Naive thymus-derived CD4-positive, alpha-beta T cell (primary cell): ENCODE measurements at regions of chr4 and their contacts with region 1.

Region 1: DNA sequence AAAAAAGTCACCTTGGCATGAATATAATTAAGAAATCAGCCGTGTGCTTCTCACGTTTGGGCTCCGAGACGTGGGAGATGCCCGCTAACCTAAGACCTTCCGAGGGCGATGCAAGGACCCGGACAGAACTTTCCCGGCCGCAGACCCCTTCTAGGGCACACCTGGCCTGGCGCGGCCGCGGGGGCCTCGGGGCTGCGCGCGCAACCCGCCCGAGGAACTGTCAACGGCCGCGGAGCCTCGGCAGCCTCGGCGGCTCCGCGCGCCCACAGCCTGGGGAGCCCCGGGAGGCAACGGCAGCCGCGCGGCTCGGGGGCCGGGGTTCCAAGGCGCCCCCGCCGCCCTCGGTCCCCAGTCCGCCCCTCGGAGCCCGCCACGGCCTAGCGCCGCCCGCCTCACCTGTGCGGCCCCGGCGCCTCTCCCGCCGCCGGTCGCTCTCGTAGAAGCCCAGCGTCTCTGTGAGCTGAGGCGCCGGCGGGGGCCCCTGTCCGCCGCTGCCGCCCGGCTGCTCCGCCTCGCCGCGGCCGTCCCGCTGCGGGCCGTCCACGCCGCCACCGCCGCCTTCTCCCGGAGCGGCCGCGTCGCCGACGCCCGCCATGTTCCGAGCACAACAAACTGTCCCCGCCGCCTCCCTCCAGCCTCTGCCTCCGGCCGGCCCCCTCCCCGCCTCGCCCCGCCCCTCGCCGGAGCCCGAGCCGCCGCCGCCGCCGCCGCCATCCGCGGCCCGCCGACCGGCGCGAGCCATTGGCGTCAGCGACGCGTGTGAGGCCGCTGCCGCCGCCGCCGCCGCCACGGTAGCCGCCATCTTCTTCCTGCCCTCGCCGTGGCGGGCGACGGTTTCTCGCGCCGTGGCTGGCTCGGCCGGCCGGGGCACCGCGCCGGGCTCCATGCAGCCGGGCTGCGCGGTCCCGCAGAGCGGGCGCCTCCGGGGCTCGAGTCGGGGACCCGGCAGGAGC is at the start of gene TAPT1:
- DNase-seq: peak; percentile 49 to 89 (median 63)
- ATAC-seq: peak; percentile 84
- H3K4me3 ChIP-seq: peak within 1 kb of the TSS; percentile 74
- H3K4me3 Mint-ChIP-seq: peak within 1 kb of the TSS; percentile 85 to 96 (median 92)
- H3K27ac ChIP-seq: peak within 1 kb of the TSS; percentile 84
- H3K27ac Mint-ChIP-seq: peak within 1 kb of the TSS; percentile 90 to 98 (median 96)
- H3K4me1 ChIP-seq: peaks cover 30 to 35% of the 10 kb centered on the region in 2 donors
- H3K4me1 Mint-ChIP-seq: peaks cover 40 to 67% (median 58%) of the 10 kb centered on the region in 7 donors
- H3K27me3 ChIP-seq: no peaks in the 10 kb centered on the region
- H3K27me3 Mint-ChIP-seq: peaks cover 0 to 2% (median 0%) of the 10 kb centered on the region in 5 donors
- total RNA-seq, gene TAPT1: 43.0 to 82.5 (median 70.6) TPM

Region 2: DNA sequence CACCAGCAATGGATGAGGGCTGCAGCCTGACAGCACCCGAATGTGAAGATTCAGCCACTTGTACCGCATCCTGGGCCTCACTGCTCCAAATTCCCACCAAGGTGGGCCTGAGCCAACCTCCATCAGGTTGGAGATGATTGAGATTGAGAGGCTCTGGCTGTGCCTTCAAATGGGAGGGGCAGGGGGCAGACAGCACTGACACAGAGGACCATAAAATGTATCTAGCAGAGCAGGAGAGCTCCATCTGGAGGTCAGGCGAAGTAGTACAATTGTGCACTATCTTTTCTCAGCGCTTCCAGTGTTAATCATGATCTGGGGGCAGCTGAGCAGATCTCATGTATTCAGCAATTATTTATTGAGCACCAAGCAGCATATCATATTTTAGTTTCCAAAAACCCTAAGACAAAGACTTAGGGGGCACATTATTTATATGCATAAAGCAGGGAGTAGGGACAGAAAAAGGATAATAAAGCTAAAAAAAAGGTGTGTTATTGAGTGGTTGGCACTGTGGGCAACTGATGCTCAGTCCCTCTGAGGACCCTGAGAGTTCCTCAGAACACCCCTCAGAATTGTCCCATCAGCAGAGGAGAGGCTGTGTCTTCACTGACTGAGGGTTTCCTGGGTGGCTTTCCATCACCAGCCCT is 829.9 kb before region 1 on chr4:
- CTCF ChIA-PET with region 1: no interaction called
- POLR2A ChIA-PET with region 1: no interaction called
- intact Hi-C with region 1: loop called in 1 of 2 experiments (anchors 10 kb)
- DNase-seq: peak in 7 of 9 donors; percentile 31 to 57 (median 50)
- ATAC-seq: peak; percentile 85
- H3K4me3 ChIP-seq: no peak overlapping the region
- H3K4me3 Mint-ChIP-seq: no peak overlapping the region
- H3K27ac ChIP-seq: no peak overlapping the region
- H3K27ac Mint-ChIP-seq: peak overlapping the region in 1 of 9 donors; percentile 68
- H3K4me1 ChIP-seq: peaks cover 7 to 12% of the 10 kb centered on the region in 2 donors
- H3K4me1 Mint-ChIP-seq: peaks cover 10 to 52% (median 37%) of the 10 kb centered on the region in 7 donors
- H3K27me3 ChIP-seq: no peaks in the 10 kb centered on the region
- H3K27me3 Mint-ChIP-seq: no peaks in the 10 kb centered on the region

Region 3: GRCh38 chr4:15681207-15682015 is 544.7 kb before region 1 on chr4 and contains the start of gene FAM200B:
- CTCF ChIA-PET with region 1: no interaction called
- POLR2A ChIA-PET with region 1: no interaction called
- intact Hi-C with region 1: loop called (anchors 1 to 10 kb)
- DNase-seq: peak; percentile 87 to 100 (median 93)
- ATAC-seq: peak; percentile 98
- H3K4me3 ChIP-seq: peak within 1 kb of the TSS; percentile 78
- H3K4me3 Mint-ChIP-seq: peak within 1 kb of the TSS; percentile 88 to 99 (median 94)
- H3K27ac ChIP-seq: peak within 1 kb of the TSS; percentile 94
- H3K27ac Mint-ChIP-seq: peak within 1 kb of the TSS; percentile 89 to 100 (median 98)
- H3K4me1 ChIP-seq: peaks cover 5 to 11% of the 10 kb centered on the region in 2 donors
- H3K4me1 Mint-ChIP-seq: peaks cover 22 to 54% (median 42%) of the 10 kb centered on the region in 7 donors
- H3K27me3 ChIP-seq: no peaks in the 10 kb centered on the region
- H3K27me3 Mint-ChIP-seq: no peaks in the 10 kb centered on the region
- total RNA-seq, gene FAM200B: 10.6 to 42.8 (median 27.4) TPM

Region 4: DNA sequence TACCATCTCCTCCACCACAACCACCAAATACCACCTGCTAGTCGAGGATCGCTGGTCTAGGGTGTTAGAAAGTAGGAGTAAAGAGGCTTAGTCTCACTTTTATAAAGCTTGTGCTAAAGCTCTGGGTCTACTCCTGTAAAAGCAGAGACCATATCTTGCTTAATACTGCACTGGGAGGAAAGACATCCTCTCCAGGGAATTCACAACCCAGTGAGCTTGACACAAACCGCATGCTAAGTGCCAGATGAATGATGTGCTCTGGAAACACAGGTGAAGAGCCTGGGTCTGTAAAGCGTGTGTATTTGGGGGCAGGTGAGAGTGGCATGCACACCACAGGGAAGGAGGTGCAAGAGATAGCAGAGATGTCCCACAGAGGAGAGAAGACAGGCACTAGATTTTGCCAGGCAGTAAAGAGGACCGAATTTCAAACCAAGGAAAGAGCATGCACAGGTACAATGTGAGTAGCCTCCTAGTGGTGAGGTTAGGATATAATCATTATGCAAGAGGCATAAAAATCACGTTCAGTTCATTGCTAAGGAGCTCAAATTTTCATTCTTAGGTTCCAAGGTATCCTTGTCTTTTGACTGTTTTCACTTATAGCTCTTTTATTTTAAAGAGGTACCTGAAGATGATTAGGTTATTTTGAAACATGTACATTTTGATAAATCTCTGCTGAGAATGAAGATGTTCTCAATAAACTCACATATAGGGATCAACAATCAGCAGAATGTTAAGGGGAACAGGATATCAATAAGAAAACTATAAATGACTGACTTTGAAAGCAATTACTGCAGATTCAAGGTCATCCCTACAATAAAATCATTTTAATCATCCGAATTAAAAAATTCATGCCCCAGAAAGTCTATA is 20.6 kb before region 1 on chr4:
- CTCF ChIA-PET with region 1: interaction called, 5 read pairs
- POLR2A ChIA-PET with region 1: interaction called, 4 read pairs
- intact Hi-C with region 1: loop called (anchors 1 to 2 kb)
- DNase-seq: peak in 5 of 9 donors; percentile 14 to 44 (median 33)
- ATAC-seq: peak; percentile 88
- H3K4me3 ChIP-seq: no peak overlapping the region
- H3K4me3 Mint-ChIP-seq: no peak overlapping the region
- H3K27ac ChIP-seq: no peak overlapping the region
- H3K27ac Mint-ChIP-seq: peak overlapping the region in 7 of 9 donors; percentile 21 to 78 (median 38)
- H3K4me1 ChIP-seq: peaks cover 3 to 4% of the 10 kb centered on the region in 2 donors
- H3K4me1 Mint-ChIP-seq: peaks cover 21 to 77% (median 47%) of the 10 kb centered on the region in 7 donors
- H3K27me3 ChIP-seq: no peaks in the 10 kb centered on the region
- H3K27me3 Mint-ChIP-seq: no peaks in the 10 kb centered on the region

Region 5: DNA sequence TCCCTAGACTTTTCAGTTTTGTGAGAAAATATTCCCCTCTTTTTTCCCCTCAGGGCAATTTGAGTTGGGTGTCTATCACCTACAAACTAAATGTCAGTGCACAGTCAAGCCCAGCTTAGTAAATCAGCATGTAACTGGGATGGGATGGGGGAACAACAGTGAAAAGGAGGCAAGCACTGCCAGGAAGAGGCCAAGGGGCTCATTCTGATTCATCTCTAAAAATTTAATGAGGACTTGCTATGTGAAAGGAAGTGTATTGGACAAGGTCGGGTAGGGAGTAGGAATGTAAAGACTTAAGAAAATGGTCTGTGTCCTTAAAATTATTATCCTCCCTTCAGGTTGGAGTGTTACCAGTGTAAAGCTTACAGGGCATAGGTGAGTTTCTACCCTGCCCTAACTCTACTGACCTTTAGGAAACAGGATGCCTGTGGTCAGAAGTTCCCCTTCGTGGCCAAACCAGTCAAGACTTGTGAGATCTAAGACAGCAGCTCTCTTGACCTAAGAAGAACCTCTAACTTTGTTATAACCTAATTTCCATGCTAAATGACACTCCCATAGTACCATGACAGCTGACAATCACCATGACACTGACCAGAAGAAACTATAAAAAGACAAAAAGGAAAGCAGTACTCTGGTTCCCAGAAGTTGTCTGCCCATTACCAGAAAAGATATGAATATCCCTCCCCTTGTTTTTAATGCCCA is 866.7 kb after region 1 on chr4:
- CTCF ChIA-PET with region 1: no interaction called
- POLR2A ChIA-PET with region 1: no interaction called
- intact Hi-C with region 1: no loop called
- DNase-seq: no peak
- ATAC-seq: no peak
- H3K4me3 ChIP-seq: no peak overlapping the region
- H3K4me3 Mint-ChIP-seq: no peak overlapping the region
- H3K27ac ChIP-seq: no peak overlapping the region
- H3K27ac Mint-ChIP-seq: no peak overlapping the region
- H3K4me1 ChIP-seq: no peaks in the 10 kb centered on the region
- H3K4me1 Mint-ChIP-seq: peaks cover 0 to 2% (median 0%) of the 10 kb centered on the region in 7 donors
- H3K27me3 ChIP-seq: no peaks in the 10 kb centered on the region
- H3K27me3 Mint-ChIP-seq: peaks cover 3 to 23% (median 10%) of the 10 kb centered on the region in 5 donors

Region 6: DNA sequence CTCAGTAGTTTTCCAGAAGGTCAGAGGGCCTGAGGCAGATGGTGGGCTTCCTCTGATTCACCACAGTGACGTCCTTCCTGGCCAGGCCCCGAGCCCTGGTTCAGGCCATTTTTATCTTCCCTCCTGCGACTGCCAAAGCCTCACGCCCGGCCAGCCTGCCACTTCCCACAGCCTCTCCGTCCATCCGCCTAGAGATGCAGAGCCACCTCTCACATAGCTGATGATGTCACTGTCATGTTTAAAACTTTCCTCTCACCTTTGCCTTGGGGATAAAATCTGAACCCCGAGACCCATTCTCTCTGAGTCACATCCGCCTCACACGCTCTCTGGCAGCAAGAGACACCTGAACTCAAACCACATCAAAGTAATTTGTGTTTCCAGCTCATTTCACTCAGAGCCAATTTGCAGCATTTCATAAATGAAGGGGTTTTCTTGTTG is 1110.4 kb after region 1 on chr4:
- CTCF ChIA-PET with region 1: no interaction called
- POLR2A ChIA-PET with region 1: no interaction called
- intact Hi-C with region 1: loop called (anchors 5 kb)
- DNase-seq: peak; percentile 6 to 87 (median 77)
- ATAC-seq: peak; percentile 91
- H3K4me3 ChIP-seq: no peak overlapping the region
- H3K4me3 Mint-ChIP-seq: peak overlapping the region in 9 of 10 donors; percentile 36 to 73 (median 52)
- H3K27ac ChIP-seq: no peak overlapping the region
- H3K27ac Mint-ChIP-seq: peak overlapping the region; percentile 64 to 90 (median 85)
- H3K4me1 ChIP-seq: peaks cover 16 to 22% of the 10 kb centered on the region in 2 donors
- H3K4me1 Mint-ChIP-seq: peaks cover 13 to 40% (median 26%) of the 10 kb centered on the region in 7 donors
- H3K27me3 ChIP-seq: no peaks in the 10 kb centered on the region
- H3K27me3 Mint-ChIP-seq: peaks cover 0 to 12% (median 0%) of the 10 kb centered on the region in 5 donors

Region 7: DNA sequence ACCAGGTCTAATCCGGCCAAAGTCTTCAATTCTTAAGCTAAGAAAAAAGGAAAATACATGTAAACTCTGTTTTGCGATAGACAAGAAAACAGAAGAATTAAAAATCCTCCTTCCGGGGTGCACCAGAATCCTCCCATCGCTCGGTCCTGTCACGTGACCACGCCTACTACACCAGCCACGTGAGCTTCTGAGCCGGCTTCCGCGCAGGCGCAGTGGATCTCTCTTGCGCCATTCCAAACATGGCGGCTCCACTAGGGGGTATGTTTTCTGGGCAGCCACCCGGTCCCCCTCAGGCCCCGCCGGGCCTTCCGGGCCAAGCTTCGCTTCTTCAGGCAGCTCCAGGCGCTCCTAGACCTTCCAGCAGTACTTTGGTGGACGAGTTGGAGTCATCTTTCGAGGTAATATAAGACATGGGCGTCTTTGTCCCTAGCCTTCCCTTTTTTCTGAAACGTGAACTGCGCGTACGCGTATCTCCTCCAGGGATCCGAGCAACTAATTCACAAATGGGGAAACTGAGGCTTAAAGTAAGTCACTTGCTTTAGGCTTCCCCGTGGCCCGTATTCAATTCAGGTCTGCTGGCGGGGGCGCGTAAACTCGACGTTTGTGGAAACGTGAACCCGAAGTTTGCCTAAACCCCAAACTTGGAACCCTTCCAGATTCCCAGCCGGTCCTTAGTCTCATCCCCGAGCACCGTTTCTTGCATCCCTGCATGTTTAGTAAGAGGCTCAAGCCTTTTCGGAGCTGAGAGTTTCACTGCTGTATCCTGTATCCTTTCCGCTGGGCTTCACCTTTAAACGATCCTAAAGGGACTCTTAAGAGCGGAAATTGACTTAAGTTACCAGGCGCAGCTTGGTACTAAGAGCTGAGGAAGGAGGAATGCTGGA is 1388.5 kb after region 1 on chr4 and contains the start of gene MED28:
- CTCF ChIA-PET with region 1: no interaction called
- POLR2A ChIA-PET with region 1: interaction called, 3 read pairs
- intact Hi-C with region 1: loop called in 1 of 2 experiments (anchors 10 kb)
- DNase-seq: peak; percentile 91 to 96 (median 94)
- ATAC-seq: peak; percentile 97
- H3K4me3 ChIP-seq: peak within 1 kb of the TSS; percentile 100
- H3K4me3 Mint-ChIP-seq: peak within 1 kb of the TSS; percentile 86 to 100 (median 96)
- H3K27ac ChIP-seq: peak within 1 kb of the TSS; percentile 94
- H3K27ac Mint-ChIP-seq: peak within 1 kb of the TSS; percentile 92 to 99 (median 97)
- H3K4me1 ChIP-seq: peaks cover 19 to 31% of the 10 kb centered on the region in 2 donors
- H3K4me1 Mint-ChIP-seq: peaks cover 23 to 58% (median 45%) of the 10 kb centered on the region in 7 donors
- H3K27me3 ChIP-seq: no peaks in the 10 kb centered on the region
- H3K27me3 Mint-ChIP-seq: no peaks in the 10 kb centered on the region
- total RNA-seq, gene MED28: 50.1 to 82.1 (median 55.7) TPM